GM18951 (cell line): ENCODE measurements at regions of chr12 and their contacts with region 1.

Region 1: GRCh38 chr12:123269384-123269892 is 2.2 kb downstream of the CDK2AP1 start:
- POLR2A ChIP-seq: peak; percentile 40

Region 2: DNA sequence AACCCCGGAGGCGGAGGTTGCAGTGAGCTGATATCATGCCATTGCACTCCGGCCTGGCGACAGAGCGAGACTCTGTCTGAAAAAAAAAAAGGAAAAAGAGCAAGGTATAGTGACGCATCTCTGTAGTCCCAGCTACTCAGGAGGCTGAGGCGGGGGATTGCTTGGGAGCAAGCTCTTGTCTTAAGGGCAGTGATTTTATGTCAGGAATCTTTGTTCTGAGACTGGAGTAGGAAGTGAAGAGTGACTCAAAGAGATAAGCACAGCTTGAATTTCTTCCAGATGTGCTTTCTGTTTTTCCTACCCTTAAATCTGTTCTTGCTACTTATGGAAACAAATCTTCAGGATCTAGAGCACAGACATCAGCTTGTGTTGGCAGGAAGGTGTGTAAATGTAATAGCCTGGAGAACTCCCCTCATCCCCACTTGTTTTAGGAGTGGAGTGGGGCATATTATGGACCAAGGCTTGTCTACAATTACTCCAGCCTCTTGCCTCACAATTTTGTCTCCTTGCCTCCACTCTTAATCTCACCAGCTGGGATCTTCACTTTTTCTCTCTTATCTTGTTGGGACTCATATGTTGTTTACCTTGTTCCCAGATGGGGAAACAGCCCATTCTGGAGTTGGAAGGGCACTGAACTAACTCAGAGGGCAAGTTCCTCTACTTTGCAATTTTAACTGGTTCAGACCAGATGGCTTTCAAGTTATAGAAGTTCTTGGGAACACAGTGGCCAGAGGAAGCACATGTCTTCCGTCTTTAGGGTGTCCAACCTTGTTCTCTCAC is 322.5 kb after region 1 on chr12:
- in situ Hi-C with region 1: loop called (anchors 10 kb)
- POLR2A ChIP-seq: no peak